Sciatic nerve (tissue), 2 donors: ENCODE measurements at regions of chr1 and their contacts with region 1.

Region 1: DNA sequence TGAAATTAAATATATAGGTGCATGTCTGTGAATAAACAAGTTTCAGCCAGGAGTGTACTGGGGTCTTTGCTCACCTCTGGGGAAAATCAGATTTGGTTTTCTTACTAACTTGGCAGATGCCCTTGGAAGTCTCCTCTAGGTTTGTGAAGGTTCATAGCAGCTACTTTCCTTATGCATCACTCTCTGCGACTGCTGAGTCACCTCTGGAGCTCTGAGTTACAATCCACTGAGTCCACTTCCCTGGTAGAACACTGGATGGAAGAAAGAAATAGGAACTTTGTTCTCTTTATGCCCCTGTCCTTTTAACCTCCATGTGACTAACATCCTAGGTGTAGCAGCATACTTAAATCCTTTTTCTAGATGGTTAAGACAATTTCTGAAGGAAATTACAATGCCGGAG is 4.4 kb upstream of the FASLG start:
- DNase-seq: no peak
- ATAC-seq: no peak

Region 2: GRCh38 chr1:172220376-172220775 is 434.2 kb before region 1 on chr1:
- intact Hi-C with region 1: no loop called
- DNase-seq: no peak
- ATAC-seq: no peak

Region 3: GRCh38 chr1:172567720-172568119 is 86.8 kb before region 1 on chr1:
- intact Hi-C with region 1: no loop called
- DNase-seq: no peak
- ATAC-seq: no peak

Region 4: GRCh38 chr1:172969611-172970010 is 315.1 kb after region 1 on chr1:
- intact Hi-C with region 1: no loop called
- DNase-seq: no peak
- ATAC-seq: no peak

Region 5: GRCh38 chr1:173682176-173682575 is 1027.6 kb after region 1 on chr1:
- intact Hi-C with region 1: loop called (anchors 5 kb)
- DNase-seq: no peak
- ATAC-seq: no peak